ENCODE measurements at regions of chr12 and their contacts with region 1.

Region 1: GRCh38 chr12:47773062-47773857 is at the start of gene SLC48A1:
- DNase-seq: peak; percentile 63 to 84 (median 80)
- ATAC-seq: peak; percentile 96
- H3K4me3 ChIP-seq: peak within 1 kb of the TSS; percentile 59
- H3K4me3 Mint-ChIP-seq: peak within 1 kb of the TSS in 9 of 10 donors; percentile 83 to 94 (median 91)
- H3K27ac ChIP-seq: peak within 1 kb of the TSS; percentile 74
- H3K27ac Mint-ChIP-seq: peak within 1 kb of the TSS; percentile 75 to 94 (median 80)
- H3K4me1 ChIP-seq: peaks cover 7 to 8% of the 10 kb centered on the region in 2 donors
- H3K4me1 Mint-ChIP-seq: peaks cover 7 to 47% (median 25%) of the 10 kb centered on the region in 7 donors
- H3K27me3 ChIP-seq: no peaks in the 10 kb centered on the region
- H3K27me3 Mint-ChIP-seq: peaks cover 0 to 8% (median 0%) of the 10 kb centered on the region in 5 donors
- total RNA-seq, gene SLC48A1: 6.7 to 14.3 (median 10.0) TPM

Region 2: DNA sequence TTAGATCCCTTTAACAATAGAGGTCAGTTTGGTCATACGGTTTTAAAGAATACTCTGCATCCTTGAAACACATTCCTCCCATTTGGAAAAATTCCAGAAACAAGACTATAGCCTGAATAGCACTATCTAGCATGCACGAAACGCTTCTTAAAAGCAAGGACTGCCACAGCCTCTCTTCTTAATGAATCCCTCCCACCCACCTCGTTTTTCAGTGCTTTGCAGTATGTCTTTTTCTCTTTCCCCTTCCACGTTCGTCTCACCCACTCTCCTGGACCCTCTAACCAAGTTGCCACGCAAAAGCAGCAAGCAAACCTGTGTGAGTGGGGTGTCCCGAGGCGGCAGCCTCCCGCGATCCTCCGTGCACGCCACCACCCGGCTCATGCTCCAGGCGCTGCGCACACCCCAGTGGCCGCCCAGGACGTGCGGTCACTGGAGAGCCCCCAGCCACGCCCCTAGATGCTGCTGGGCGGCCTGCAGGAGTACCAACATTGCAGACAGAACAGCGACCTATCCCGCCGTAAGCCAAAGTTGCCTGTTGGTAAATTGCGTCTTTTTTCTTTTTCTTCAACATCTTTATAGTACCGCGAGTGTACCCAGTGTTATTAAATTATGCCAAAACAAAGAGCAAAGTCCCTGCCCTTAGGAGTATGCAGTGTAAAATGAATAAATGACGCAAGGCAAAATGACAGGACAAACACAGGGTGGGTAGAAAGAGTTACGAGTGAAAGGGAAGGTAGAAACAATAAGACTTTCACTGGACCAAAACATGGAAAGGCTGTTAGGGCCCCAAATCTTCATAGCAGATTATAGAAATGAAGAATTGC is 947.5 kb before region 1 on chr12 and contains the start of gene SLC38A4:
- CTCF ChIA-PET with region 1: no interaction called
- POLR2A ChIA-PET with region 1: no interaction called
- intact Hi-C with region 1: no loop called
- DNase-seq: no peak
- ATAC-seq: no peak
- H3K4me3 ChIP-seq: no peak within 1 kb of the TSS
- H3K4me3 Mint-ChIP-seq: no peak within 1 kb of the TSS
- H3K27ac ChIP-seq: no peak within 1 kb of the TSS
- H3K27ac Mint-ChIP-seq: no peak within 1 kb of the TSS
- H3K4me1 ChIP-seq: peaks cover 0 to 3% of the 10 kb centered on the region in 2 donors
- H3K4me1 Mint-ChIP-seq: peaks cover under 1 to 4% (median 2%) of the 10 kb centered on the region in 7 donors
- H3K27me3 ChIP-seq: no peaks in the 10 kb centered on the region
- H3K27me3 Mint-ChIP-seq: peaks cover 69 to 82% (median 75%) of the 10 kb centered on the region in 5 donors
- total RNA-seq, gene SLC38A4: not detected

Region 3: DNA sequence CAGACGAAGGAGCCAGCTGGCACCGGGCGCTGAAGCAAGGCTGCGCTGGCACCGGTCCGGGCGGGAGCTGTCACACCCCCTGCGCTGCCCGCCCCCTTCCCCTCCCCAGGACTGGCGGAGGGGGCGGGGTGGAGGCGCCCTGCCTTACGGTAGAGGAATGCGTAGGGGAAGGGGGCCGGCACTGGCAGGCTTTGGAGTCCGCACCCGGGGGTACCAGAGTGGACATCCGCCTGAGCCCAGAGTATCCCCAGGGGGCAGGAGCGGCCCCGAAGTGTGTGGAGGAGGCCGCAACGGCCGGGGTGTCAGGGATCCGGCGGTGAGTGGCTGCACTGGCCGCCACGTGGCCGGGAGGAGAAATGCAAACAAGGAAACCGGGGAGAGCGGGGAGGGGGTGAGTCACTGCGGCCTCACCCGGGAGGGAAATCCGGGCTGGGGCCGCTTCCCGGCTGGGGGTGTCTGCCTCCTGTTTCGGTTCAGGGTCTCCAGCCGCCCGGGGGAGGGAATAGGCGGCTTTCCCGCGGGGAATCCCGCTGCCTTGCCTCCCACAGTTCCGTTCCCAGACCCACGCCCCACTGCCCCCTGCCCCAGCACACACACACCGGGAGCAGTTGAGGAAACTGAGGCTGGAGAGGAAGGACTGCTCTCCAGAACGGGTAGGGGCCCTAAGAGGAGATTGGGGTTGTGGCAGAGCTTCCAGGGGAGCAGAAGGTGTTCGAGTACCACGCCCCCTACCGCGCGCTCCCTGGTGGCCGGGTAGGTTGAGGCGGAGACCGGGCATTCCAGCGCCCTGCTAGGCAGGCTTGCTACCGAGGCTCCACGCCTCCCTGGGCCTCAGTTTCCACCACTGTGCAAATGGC is 14.2 kb before region 1 on chr12 and contains the start of gene RAPGEF3:
- CTCF ChIA-PET with region 1: interaction called, 6 read pairs
- POLR2A ChIA-PET with region 1: interaction called, 10 read pairs
- intact Hi-C with region 1: loop called (anchors 1 to 2 kb)
- DNase-seq: peak; percentile 47 to 81 (median 60)
- ATAC-seq: peak; percentile 91
- H3K4me3 ChIP-seq: peak within 1 kb of the TSS; percentile 66
- H3K4me3 Mint-ChIP-seq: peak within 1 kb of the TSS; percentile 61 to 85 (median 80)
- H3K27ac ChIP-seq: peak within 1 kb of the TSS; percentile 27
- H3K27ac Mint-ChIP-seq: peak within 1 kb of the TSS in 4 of 9 donors; percentile 29 to 55 (median 47)
- H3K4me1 ChIP-seq: peaks cover 9 to 11% of the 10 kb centered on the region in 2 donors
- H3K4me1 Mint-ChIP-seq: peaks cover 0 to 23% (median 9%) of the 10 kb centered on the region in 7 donors
- H3K27me3 ChIP-seq: no peaks in the 10 kb centered on the region
- H3K27me3 Mint-ChIP-seq: peaks cover 0 to 5% (median 0%) of the 10 kb centered on the region in 5 donors
- total RNA-seq, gene RAPGEF3: 0.08 to 1.9 (median 1.1) TPM in 4 of 5 experiments, not detected in the other

Region 4: DNA sequence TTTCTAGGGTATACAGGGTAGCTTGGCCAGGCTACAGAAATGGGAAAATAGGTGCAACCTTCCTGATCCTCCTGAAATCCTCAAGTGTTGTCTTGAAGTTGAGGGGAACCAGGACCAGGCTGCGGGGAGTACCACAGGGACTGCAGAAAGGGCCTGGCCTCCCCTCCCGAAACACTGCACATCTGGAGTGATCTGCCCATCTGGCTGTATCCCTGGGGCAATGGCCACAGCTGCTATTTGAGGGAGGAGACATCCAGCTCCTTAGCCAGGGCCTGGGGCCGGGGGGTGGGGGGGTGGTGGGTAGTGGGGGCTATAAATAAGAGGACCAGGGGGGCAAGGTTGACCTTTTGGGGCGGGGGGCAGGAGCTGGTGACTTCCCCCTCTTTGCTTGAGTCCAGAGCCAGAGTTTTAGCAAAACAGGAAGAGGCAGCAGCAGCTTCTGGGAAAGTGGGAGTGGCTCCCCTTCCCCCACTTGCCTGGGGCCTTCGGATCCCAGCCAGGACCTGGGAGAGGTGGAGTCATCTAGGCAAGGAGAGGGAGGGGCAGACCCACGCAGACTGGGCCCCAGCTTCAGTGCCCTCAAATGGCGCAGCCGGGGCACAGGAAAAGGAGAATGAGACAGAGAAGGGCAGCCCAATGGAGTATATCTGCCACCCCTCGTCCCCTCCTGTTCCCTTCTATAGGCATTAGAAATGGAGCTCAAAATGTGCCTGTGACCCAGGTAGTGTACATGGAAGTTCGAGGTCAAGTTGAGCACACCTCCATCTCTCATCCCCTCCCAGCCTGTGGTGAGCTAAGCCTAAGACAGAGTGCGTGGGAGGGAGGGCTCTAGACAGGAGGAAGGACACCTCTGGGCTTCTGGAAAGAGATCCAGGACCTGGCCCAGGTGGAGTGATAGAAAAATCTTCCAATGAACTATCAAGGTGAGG is 55.6 kb after region 1 on chr12:
- CTCF ChIA-PET with region 1: interaction called, 167 read pairs
- POLR2A ChIA-PET with region 1: interaction called, 15 read pairs
- intact Hi-C with region 1: no loop called
- DNase-seq: peak in 1 of 9 donors; percentile 36
- ATAC-seq: no peak
- H3K4me3 ChIP-seq: no peak overlapping the region
- H3K4me3 Mint-ChIP-seq: peak overlapping the region in 8 of 10 donors; percentile 12 to 73 (median 51)
- H3K27ac ChIP-seq: peak overlapping the region; percentile 52
- H3K27ac Mint-ChIP-seq: peak overlapping the region; percentile 73 to 97 (median 86)
- H3K4me1 ChIP-seq: peaks cover 51 to 97% of the 10 kb centered on the region in 2 donors
- H3K4me1 Mint-ChIP-seq: peaks cover 70 to 98% (median 88%) of the 10 kb centered on the region in 7 donors
- H3K27me3 ChIP-seq: no peaks in the 10 kb centered on the region
- H3K27me3 Mint-ChIP-seq: no peaks in the 10 kb centered on the region

Region 5: DNA sequence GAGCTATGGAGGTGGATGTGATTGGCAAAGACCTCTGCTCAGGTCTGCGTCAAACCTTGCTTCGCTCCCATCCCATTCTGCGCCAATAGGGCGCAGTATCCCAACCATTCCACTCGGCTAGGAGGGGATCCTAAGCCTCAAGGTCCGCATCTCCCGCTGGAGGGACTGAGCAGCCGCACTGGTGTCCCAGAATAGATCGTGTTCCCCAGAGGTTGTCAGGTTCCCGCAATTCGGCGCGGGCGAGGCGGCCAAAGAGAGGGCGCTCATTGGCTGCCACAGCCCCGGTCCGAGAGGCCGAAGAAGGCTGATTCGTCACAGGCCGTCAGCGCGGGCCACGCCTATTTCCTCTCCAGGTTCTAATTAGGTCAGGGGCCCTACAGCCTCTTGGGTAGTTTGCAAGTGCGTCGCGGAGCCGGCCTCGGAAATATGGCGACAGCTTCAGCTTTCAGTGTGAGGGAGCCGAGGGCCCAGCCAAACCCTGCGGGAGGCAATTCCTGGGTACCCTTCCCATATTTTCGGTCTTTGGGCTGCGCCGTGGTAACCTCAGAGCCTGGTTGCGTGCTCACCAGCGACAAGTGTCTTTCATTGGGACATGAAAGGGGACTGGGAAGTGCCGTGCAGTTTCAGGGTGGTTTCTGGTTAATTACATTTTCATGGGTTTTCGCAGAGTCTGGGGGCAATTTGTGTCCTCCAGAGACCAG is 424.9 kb after region 1 on chr12:
- CTCF ChIA-PET with region 1: no interaction called
- POLR2A ChIA-PET with region 1: no interaction called
- intact Hi-C with region 1: no loop called
- DNase-seq: peak; percentile 75 to 88 (median 86)
- ATAC-seq: peak; percentile 97
- H3K4me3 ChIP-seq: peak overlapping the region; percentile 89
- H3K4me3 Mint-ChIP-seq: peak overlapping the region; percentile 83 to 96 (median 92)
- H3K27ac ChIP-seq: peak overlapping the region; percentile 98
- H3K27ac Mint-ChIP-seq: peak overlapping the region; percentile 94 to 99 (median 96)
- H3K4me1 ChIP-seq: peaks cover 28% of the 10 kb centered on the region in 2 donors
- H3K4me1 Mint-ChIP-seq: peaks cover 31 to 53% (median 48%) of the 10 kb centered on the region in 7 donors
- H3K27me3 ChIP-seq: no peaks in the 10 kb centered on the region
- H3K27me3 Mint-ChIP-seq: peaks cover 0 to 28% (median 0%) of the 10 kb centered on the region in 5 donors

Measured in naive thymus-derived CD4-positive, alpha-beta T cell (primary cell).